ENCODE measurements at regions of chr7 and their contacts with region 1.

Region 1: DNA sequence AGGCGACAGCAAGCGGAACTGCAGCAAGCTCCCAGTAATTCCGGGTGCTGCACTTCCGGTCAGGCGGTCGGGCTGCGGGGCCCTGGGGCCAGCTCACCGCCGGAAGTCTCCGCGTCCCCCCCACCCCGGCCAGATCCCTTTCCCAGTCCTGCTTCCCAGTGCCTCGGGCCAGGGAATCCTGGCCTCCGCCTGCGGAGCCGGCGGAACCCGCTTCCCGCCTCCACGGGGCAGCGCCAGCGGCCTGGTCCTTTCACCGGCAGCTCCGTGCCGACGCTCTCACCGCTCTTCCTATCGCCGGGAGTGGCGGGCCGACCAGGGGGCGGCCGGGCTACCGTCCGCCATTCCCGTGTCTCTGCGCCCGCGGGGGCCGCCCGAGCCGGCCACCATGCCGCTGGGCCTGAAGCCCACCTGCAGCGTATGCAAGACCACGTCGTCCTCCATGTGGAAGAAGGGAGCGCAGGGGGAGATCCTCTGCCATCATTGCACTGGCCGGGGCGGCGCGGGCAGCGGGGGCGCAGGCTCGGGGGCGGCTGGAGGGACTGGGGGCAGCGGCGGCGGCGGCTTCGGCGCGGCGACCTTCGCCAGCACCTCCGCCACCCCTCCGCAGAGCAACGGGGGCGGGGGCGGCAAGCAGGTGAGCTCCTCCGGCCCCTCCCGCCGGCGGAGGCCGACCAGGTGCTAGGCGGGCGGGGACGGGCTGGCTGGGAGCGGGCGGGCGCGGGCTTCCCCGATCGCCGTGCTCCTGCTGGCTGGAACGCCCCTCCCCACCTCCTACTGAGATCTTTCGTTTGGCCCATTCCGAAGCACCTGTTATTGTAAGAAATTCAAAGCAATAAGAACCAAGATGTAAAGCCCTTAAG is at the start of gene GATAD1:
- DNase-seq: peak; percentile 93 to 95
- ATAC-seq: peak; percentile 99 to 100 (median 100)
- H3K4me3 ChIP-seq: peak within 1 kb of the TSS; percentile 80
- H3K27ac ChIP-seq: peak within 1 kb of the TSS; percentile 91
- H3K4me1 ChIP-seq: peaks cover 18% of the 10 kb centered on the region
- H3K27me3 ChIP-seq: no peaks in the 10 kb centered on the region
- CTCF ChIP-seq: peak; percentile 96
- total RNA-seq, gene GATAD1: 7.4 to 12.2 (median 9.0) TPM

Region 2: DNA sequence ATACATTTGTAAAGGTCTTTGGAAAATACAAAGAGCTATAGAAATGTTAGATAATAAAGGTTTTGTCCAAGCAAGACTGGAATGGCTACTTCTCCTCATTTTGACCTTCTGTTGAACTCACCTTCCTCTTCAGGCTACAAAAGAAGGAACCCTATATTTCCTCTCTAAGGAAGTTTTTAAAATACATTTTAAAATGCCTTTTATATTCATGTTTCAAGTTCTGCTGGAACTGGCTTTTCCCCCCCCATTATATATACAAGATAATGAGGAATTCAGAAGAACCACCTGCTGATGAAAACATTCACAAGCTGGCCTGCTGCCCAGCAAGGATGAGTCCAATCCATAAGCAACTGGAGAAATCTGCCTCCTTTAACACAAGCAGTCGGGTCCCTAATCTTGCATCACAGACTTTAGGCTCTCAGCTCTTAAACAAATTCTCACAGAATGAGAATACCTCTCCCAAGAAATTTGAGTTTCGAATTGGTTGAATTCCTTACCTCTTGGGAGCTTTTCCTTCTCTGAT is 611.7 kb before region 1 on chr7:
- intact Hi-C with region 1: loop called in 1 of 2 experiments (anchors 2 kb)
- DNase-seq: no peak
- ATAC-seq: no peak
- H3K4me3 ChIP-seq: no peak overlapping the region
- H3K27ac ChIP-seq: no peak overlapping the region
- H3K4me1 ChIP-seq: no peaks in the 10 kb centered on the region
- H3K27me3 ChIP-seq: no peaks in the 10 kb centered on the region
- CTCF ChIP-seq: no peak

Region 3: DNA sequence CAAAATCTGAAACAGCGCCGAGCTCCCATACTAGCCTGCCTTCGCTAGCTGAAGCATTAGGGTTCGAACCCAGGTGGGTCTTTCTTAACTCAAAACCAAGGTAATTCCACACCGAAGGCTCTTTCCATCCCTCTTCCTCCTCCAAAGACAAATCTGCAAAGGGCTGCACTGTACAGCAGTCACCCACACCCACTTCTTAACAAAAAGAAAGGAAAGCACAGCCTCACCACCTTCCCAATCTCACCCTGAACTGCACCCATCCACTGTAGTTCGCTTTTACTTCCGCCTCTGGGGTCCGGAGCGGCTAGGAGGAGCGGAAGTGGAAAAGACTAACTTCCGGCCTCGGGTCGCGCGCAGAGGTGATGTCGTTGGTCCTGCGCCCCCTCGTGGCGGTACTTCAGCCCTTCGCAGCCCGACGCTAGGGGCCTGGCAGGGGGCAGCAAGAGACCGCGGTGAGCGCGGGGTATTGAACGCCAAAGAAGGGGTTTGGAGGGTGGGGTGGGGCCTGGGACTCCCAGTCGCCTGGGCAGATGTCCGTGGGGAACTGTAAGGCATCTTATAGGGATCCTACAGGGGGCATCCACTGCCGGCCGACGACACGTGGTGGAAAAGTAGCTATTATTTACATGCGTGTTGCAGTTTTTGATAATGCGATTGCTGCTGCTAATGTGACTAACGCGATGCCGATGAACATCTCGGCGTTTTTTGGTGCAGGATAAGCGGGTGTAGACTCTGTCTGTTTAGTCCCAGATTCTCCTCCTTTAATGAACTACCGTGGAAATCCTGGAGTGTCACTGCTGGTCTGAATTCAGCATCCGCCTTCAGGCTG is 566.9 kb before region 1 on chr7 and contains the start of gene MTERF1:
- intact Hi-C with region 1: loop called in 1 of 2 experiments (anchors 5 kb)
- DNase-seq: peak; percentile 93 to 95
- ATAC-seq: peak; percentile 98 to 100 (median 100)
- H3K4me3 ChIP-seq: peak within 1 kb of the TSS; percentile 94
- H3K27ac ChIP-seq: no peak within 1 kb of the TSS
- H3K4me1 ChIP-seq: peaks cover 7% of the 10 kb centered on the region
- H3K27me3 ChIP-seq: no peaks in the 10 kb centered on the region
- CTCF ChIP-seq: peak; percentile 81
- total RNA-seq, gene MTERF1: 5.0 to 8.0 (median 6.9) TPM

Region 4: GRCh38 chr7:92052684-92053083 is 394.9 kb before region 1 on chr7:
- intact Hi-C with region 1: no loop called
- DNase-seq: no peak
- ATAC-seq: no peak
- H3K4me3 ChIP-seq: no peak overlapping the region
- H3K27ac ChIP-seq: peak overlapping the region; percentile 23
- H3K4me1 ChIP-seq: peaks cover 6% of the 10 kb centered on the region
- H3K27me3 ChIP-seq: no peaks in the 10 kb centered on the region
- CTCF ChIP-seq: no peak

Region 5: DNA sequence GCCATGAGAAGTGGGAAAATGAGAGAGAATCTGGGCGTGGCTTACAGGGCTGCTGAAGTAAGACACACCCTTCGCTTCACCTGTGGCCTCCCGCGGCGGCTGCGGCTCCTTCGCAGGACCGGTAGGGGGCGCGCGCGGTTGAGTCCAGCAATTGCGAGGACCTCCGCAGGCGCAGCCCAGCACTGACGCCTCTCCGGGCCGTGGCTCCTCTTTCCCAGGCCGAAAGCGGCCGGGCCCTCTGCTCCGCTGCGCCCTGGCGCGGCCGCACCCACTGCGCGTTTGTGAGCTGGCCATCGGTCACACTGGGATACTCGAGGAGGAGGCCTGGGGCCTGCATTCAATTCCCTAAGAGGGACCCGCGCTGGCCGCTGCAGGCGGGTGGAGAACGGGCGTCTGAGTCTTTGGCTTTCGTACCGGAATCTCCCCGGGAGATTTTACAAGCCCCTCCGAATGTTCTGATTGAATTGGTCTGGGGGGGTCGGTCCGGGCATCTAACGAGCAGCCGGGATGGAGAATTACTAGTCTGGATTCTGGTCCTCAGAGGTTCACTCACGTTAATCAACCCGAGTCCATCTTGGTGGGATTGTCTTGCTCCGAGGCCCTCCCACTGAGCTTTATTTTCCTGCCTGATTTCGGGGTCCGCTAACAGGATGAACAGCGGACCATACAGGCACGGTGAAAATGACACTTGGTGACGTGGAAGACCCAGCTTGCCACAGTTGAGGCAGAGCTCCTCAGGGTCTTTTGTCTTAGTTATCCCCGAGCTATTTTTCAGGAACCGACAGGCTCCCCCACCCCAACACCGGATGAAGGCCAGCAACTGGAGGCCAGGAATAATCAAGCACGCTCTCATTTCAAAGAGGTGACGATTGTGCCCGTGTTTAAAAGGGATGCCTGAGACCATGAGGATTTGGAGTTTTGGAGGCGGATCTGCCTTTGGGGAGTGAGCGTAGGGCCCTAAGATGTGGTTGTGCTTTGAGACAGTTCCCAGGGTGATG is 268.3 kb before region 1 on chr7 and contains the start of gene LRRD1:
- intact Hi-C with region 1: loop called in 1 of 2 experiments (anchors 5 kb)
- DNase-seq: peak; percentile 87 to 91
- ATAC-seq: peak; percentile 92 to 99 (median 98)
- H3K4me3 ChIP-seq: peak within 1 kb of the TSS; percentile 66
- H3K27ac ChIP-seq: peak within 1 kb of the TSS; percentile 42
- H3K4me1 ChIP-seq: no peaks in the 10 kb centered on the region
- H3K27me3 ChIP-seq: no peaks in the 10 kb centered on the region
- CTCF ChIP-seq: peak; percentile 95
- total RNA-seq, gene LRRD1: not detected

Region 6: DNA sequence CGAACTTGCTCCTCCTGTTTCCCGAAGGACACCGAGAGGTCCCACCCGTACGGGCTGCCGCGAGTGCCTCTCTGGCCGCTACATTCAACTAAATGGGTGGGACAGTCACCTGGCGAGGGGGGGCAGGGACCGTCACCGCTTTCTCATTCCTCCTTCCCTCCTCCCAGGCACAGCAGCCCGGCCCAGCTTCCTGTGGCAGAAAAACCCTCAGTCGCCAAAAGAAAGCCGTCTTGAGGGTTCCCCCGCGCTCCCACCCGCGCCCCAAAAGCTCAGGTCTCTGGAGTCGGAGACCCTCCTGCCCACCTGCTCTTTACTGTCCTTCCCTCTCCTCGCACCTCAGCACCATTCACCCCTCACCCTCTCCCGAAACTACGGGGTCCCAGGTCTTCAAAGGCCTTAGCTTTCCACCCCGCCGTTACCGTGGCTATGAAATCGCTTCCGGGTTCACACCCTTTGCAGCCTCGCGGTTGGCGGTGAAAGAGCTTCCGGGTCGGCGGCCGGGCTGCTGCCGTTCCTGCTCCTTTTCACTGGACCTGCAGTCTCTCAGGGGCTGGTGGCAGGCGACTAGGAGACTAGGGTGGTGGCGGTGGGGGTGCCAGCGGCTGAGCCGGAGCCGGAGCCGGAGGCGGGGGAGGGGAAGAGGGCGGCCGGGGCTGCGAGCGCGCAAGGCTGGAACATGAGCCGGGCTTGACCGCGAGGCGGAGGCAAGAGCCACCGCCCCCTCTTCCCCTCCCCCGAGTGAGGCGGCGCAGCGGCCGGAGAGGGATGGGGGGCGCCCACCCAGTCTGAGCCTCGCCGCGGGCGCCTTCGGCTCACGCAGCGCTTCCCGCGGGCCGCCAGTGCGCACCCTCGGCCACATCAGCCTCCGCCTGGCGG is 201.8 kb before region 1 on chr7 and contains the starts of genes ANKIB1 and KRIT1:
- intact Hi-C with region 1: loop called (anchors 5 kb)
- DNase-seq: peak; percentile 87 to 92
- ATAC-seq: peak; percentile 94 to 97 (median 96)
- H3K4me3 ChIP-seq: peak within 1 kb of the TSS; percentile 87
- H3K27ac ChIP-seq: peak within 1 kb of the TSS; percentile 90
- H3K4me1 ChIP-seq: peaks cover 32% of the 10 kb centered on the region
- H3K27me3 ChIP-seq: no peaks in the 10 kb centered on the region
- CTCF ChIP-seq: no peak
- total RNA-seq, gene ANKIB1: 23.3 to 31.9 (median 26.7) TPM
- total RNA-seq, gene KRIT1: 23.5 to 30.5 (median 26.7) TPM

Region 7: GRCh38 chr7:92343719-92344118 is 103.9 kb before region 1 on chr7:
- intact Hi-C with region 1: no loop called
- DNase-seq: no peak
- ATAC-seq: no peak
- H3K4me3 ChIP-seq: no peak overlapping the region
- H3K27ac ChIP-seq: no peak overlapping the region
- H3K4me1 ChIP-seq: no peaks in the 10 kb centered on the region
- H3K27me3 ChIP-seq: no peaks in the 10 kb centered on the region
- CTCF ChIP-seq: no peak

Region 8: GRCh38 chr7:92421676-92422435 is 25.7 kb before region 1 on chr7:
- intact Hi-C with region 1: loop called in 1 of 2 experiments (anchors 2 kb)
- DNase-seq: no peak
- ATAC-seq: no peak
- H3K4me3 ChIP-seq: no peak overlapping the region
- H3K27ac ChIP-seq: no peak overlapping the region
- H3K4me1 ChIP-seq: no peaks in the 10 kb centered on the region
- H3K27me3 ChIP-seq: peaks cover 0 to 11% (median 0%) of the 10 kb centered on the region in 3 donors
- CTCF ChIP-seq: no peak

Region 9: GRCh38 chr7:92528188-92528957 is 80.8 kb after region 1 on chr7 and contains the starts of genes PEX1 and RBM48:
- intact Hi-C with region 1: loop called in 1 of 2 experiments (anchors 5 kb)
- DNase-seq: peak; percentile 96 to 98
- ATAC-seq: peak; percentile 98 to 99 (median 98)
- H3K4me3 ChIP-seq: peak within 1 kb of the TSS; percentile 86
- H3K27ac ChIP-seq: peak within 1 kb of the TSS; percentile 95
- H3K4me1 ChIP-seq: peaks cover 17% of the 10 kb centered on the region
- H3K27me3 ChIP-seq: no peaks in the 10 kb centered on the region
- CTCF ChIP-seq: peak; percentile 31
- total RNA-seq, gene PEX1: 11.1 to 14.2 (median 11.8) TPM
- total RNA-seq, gene RBM48: 7.7 to 15.8 (median 10.3) TPM

Region 10: GRCh38 chr7:92547579-92547978 is 100.0 kb after region 1 on chr7:
- intact Hi-C with region 1: no loop called
- DNase-seq: no peak
- ATAC-seq: peak in 3 of 4 donors; percentile 45 to 76 (median 57)
- H3K4me3 ChIP-seq: no peak overlapping the region
- H3K27ac ChIP-seq: no peak overlapping the region
- H3K4me1 ChIP-seq: no peaks in the 10 kb centered on the region
- H3K27me3 ChIP-seq: no peaks in the 10 kb centered on the region
- CTCF ChIP-seq: no peak